ENCODE measurements at regions of chr22 and their contacts with region 1.

Region 1: DNA sequence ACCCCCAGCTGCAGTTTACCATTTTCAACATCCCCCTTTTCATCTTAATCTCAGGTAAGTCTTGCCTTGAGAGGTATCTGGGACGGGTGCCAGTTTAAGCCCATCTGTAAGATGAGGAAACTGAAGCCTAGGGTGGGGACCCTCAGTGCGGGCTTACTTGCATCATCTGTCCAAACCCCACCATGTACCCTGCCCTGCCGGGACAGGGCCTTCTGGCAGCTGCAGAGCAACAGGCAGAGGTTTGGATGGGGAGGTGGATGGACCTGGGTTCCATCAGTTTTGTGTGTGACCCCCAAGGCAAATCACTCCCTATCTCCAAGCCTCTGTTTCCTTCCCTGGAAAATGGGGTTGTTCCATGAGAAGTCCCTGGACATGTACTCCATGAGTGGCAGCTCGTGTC is 67.5 kb downstream of the MN1 start:
- DNase-seq: no peak
- H3K4me3 ChIP-seq: no peak overlapping the region
- H3K27ac ChIP-seq: no peak overlapping the region
- H3K4me1 ChIP-seq: peaks cover 1 to 5% (median 2%) of the 10 kb centered on the region in 4 experiments; a peak in 6 of 7 replicates
- H3K27me3 ChIP-seq: no peaks in the 10 kb centered on the region
- CTCF ChIP-seq: no peak
- EP300 ChIP-seq: no peak
- POLR2A ChIP-seq: no peak
- RAD21 ChIP-seq: no peak

Region 2: GRCh38 chr22:27718186-27719032 is 15.7 kb before region 1 on chr22:
- CTCF ChIA-PET with region 1: interaction called, 4 read pairs
- POLR2A ChIA-PET with region 1: interaction called, 11 read pairs
- DNase-seq: no peak
- H3K4me3 ChIP-seq: no peak overlapping the region
- H3K27ac ChIP-seq: no peak overlapping the region
- H3K4me1 ChIP-seq: peaks cover 0 to 9% (median 4%) of the 10 kb centered on the region in 4 experiments; a peak in 6 of 7 replicates
- H3K27me3 ChIP-seq: no peaks in the 10 kb centered on the region; a peak in 1 of 7 replicates
- CTCF ChIP-seq: no peak
- EP300 ChIP-seq: no peak
- POLR2A ChIP-seq: no peak
- RAD21 ChIP-seq: no peak

Measured in H1 (cell line).